ENCODE measurements at regions of chr12 and their contacts with region 1.

Region 1: GRCh38 chr12:56461235-56462159 is 6.9 kb upstream of the SPRYD4 start:
- DNase-seq: no peak
- ATAC-seq: peak; percentile 30; the same call in 1 of the 2 replicates
- H3K4me3 ChIP-seq: no peak overlapping the region; a peak in 1 of 4 replicates
- H3K27ac ChIP-seq: no peak overlapping the region
- H3K4me1 ChIP-seq: peaks cover 5 to 23% of the 10 kb centered on the region in 2 experiments
- H3K27me3 ChIP-seq: no peaks in the 10 kb centered on the region
- CTCF ChIP-seq: no peak
- POLR2A ChIP-seq: no peak
- RAD21 ChIP-seq: no peak

Region 2: GRCh38 chr12:56206457-56207166 is 254.9 kb before region 1 on chr12:
- CTCF ChIA-PET with region 1: interaction called, 13 read pairs
- POLR2A ChIA-PET with region 1: no interaction called
- RAD21 ChIA-PET with region 1: interaction called in 1 of 2 experiments, 3 read pairs
- intact Hi-C with region 1: loop called (anchors 5 kb)
- DNase-seq: no peak
- ATAC-seq: peak; percentile 92
- H3K4me3 ChIP-seq: no peak overlapping the region
- H3K27ac ChIP-seq: no peak overlapping the region
- H3K4me1 ChIP-seq: no peaks in the 10 kb centered on the region
- H3K27me3 ChIP-seq: no peaks in the 10 kb centered on the region
- CTCF ChIP-seq: peak; percentile 69 to 82 (median 74); a peak in 5 of 6 replicates
- POLR2A ChIP-seq: no peak
- RAD21 ChIP-seq: peak; percentile 74

Measured in HCT116 (cell line).